ENCODE measurements at regions of chr7 and their contacts with region 1.

Region 1: GRCh38 chr7:111735661-111736551 is 173.6 kb upstream of the IMMP2L start:
- DNase-seq: peak; percentile 71
- H3K4me3 Mint-ChIP-seq: no peak overlapping the region
- H3K27ac Mint-ChIP-seq: no peak overlapping the region
- H3K4me1 Mint-ChIP-seq: no peaks in the 10 kb centered on the region
- H3K27me3 Mint-ChIP-seq: no peaks in the 10 kb centered on the region

Region 2: GRCh38 chr7:109844362-109844761 is 1891.5 kb before region 1 on chr7:
- CTCF ChIA-PET with region 1: no interaction called
- intact Hi-C with region 1: loop called (anchors 1 kb)
- DNase-seq: peak; percentile 18
- H3K4me3 Mint-ChIP-seq: no peak overlapping the region
- H3K27ac Mint-ChIP-seq: no peak overlapping the region
- H3K4me1 Mint-ChIP-seq: no peaks in the 10 kb centered on the region
- H3K27me3 Mint-ChIP-seq: peaks cover 10% of the 10 kb centered on the region

Region 3: GRCh38 chr7:110595690-110596325 is 1140.1 kb before region 1 on chr7:
- CTCF ChIA-PET with region 1: no interaction called
- intact Hi-C with region 1: loop called (anchors 5 kb)
- DNase-seq: no peak
- H3K4me3 Mint-ChIP-seq: no peak overlapping the region
- H3K27ac Mint-ChIP-seq: no peak overlapping the region
- H3K4me1 Mint-ChIP-seq: no peaks in the 10 kb centered on the region
- H3K27me3 Mint-ChIP-seq: no peaks in the 10 kb centered on the region

Region 4: GRCh38 chr7:111561885-111562732 is 173.8 kb before region 1 on chr7 and contains the start of gene IMMP2L:
- CTCF ChIA-PET with region 1: no interaction called
- intact Hi-C with region 1: loop called (anchors 2 kb)
- DNase-seq: peak; percentile 89
- H3K4me3 Mint-ChIP-seq: peak within 1 kb of the TSS; percentile 89
- H3K27ac Mint-ChIP-seq: peak within 1 kb of the TSS; percentile 85
- H3K4me1 Mint-ChIP-seq: peaks cover 32% of the 10 kb centered on the region
- H3K27me3 Mint-ChIP-seq: no peaks in the 10 kb centered on the region
- total RNA-seq, gene IMMP2L: 24.4 to 26.6 TPM

Region 5: GRCh38 chr7:111639934-111640333 is 96.0 kb before region 1 on chr7:
- CTCF ChIA-PET with region 1: interaction called, 4 read pairs
- intact Hi-C with region 1: loop called (anchors 5 kb)
- DNase-seq: no peak
- H3K4me3 Mint-ChIP-seq: no peak overlapping the region
- H3K27ac Mint-ChIP-seq: no peak overlapping the region
- H3K4me1 Mint-ChIP-seq: no peaks in the 10 kb centered on the region
- H3K27me3 Mint-ChIP-seq: peaks cover 7% of the 10 kb centered on the region

Region 6: DNA sequence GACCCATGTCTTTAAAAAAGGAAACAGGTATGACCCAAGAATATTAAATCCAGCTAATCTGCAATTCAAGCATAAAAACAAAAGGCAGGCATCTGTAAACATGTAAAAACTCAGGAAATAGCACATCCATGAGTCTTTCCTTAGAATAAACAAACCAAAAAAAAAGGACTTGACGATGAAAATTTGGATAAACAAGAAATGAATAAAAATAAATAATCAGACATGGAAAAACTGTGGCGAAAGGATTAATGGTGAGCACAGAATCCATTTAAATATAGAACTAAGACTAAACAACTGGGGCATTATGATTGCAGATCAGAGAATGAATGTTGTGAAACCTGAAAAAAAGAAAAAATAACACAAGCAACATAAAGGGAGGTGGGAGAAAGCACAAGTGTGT is 300.2 kb after region 1 on chr7:
- CTCF ChIA-PET with region 1: no interaction called
- intact Hi-C with region 1: no loop called
- DNase-seq: no peak
- H3K4me3 Mint-ChIP-seq: no peak overlapping the region
- H3K27ac Mint-ChIP-seq: no peak overlapping the region
- H3K4me1 Mint-ChIP-seq: no peaks in the 10 kb centered on the region
- H3K27me3 Mint-ChIP-seq: peaks cover 7% of the 10 kb centered on the region

Measured in activated naive CD4-positive, alpha-beta T cell treated with anti-CD3 and anti-CD28 coated beads for 36 hours (primary cell).